Psoas muscle (tissue), 8 donors: ENCODE measurements at regions of chr18 and their contacts with region 1.

Region 1: GRCh38 chr18:7608781-7609201 is 41.7 kb downstream of the PTPRM start:
- DNase-seq: no peak
- ATAC-seq: peak; percentile 66 to 85 (median 71)
- H3K4me3 ChIP-seq: peak overlapping the region; percentile 47
- H3K27ac ChIP-seq: peak overlapping the region; percentile 89
- H3K4me1 ChIP-seq: peaks cover 73% of the 10 kb centered on the region
- H3K27me3 ChIP-seq: no peaks in the 10 kb centered on the region
- CTCF ChIP-seq: no peak

Region 2: DNA sequence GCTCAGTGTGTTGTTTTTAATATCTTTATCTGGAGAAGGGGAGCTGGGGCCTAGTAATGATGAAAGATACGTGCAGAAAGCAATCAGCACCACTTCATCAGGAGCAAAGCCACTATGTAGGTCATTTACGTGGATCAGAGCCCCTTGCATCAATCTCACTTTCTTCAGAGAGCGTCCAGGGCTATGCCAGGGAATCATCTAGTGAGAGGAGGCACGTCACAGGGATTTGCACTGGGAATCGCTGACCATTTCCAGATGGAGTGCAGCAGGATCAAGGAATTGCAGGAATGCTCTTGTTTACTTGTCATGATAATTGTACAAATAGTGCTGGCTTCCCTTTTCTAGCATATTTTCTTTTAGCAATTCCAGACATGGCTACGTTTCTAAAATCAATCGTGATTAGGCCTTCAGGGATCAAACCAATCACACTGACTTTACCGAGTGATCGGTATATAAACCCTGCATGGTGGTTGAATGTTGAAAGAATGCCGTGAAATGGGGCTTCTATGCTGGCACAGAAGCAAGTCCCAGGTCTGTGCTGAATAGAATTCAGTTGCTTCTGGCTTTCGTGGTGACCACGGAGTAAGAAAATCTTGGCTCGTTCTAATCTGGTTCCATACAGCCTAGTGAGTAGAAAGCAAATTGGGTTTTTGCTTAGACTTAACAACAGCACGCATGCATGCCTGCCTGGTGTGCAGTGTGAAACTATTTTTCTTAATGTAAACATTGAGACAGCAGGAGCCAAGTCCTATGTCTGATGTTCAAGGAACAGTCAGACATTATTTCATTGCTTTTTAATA is 1836.3 kb before region 1 on chr18:
- intact Hi-C with region 1: no loop called
- DNase-seq: no peak
- ATAC-seq: no peak
- H3K4me3 ChIP-seq: no peak overlapping the region
- H3K27ac ChIP-seq: no peak overlapping the region
- H3K4me1 ChIP-seq: no peaks in the 10 kb centered on the region
- H3K27me3 ChIP-seq: no peaks in the 10 kb centered on the region
- CTCF ChIP-seq: no peak

Region 3: GRCh38 chr18:7658712-7659111 is 49.9 kb after region 1 on chr18:
- intact Hi-C with region 1: loop called in 1 of 2 experiments (anchors 5 kb)
- DNase-seq: no peak
- ATAC-seq: no peak
- H3K4me3 ChIP-seq: no peak overlapping the region
- H3K27ac ChIP-seq: no peak overlapping the region
- H3K4me1 ChIP-seq: peaks cover 65% of the 10 kb centered on the region
- H3K27me3 ChIP-seq: no peaks in the 10 kb centered on the region
- CTCF ChIP-seq: no peak

Region 4: GRCh38 chr18:7926526-7926925 is 317.7 kb after region 1 on chr18:
- intact Hi-C with region 1: no loop called
- DNase-seq: no peak
- ATAC-seq: peak; percentile 79 to 89 (median 86)
- H3K4me3 ChIP-seq: no peak overlapping the region
- H3K27ac ChIP-seq: no peak overlapping the region
- H3K4me1 ChIP-seq: peaks cover 25% of the 10 kb centered on the region
- H3K27me3 ChIP-seq: no peaks in the 10 kb centered on the region
- CTCF ChIP-seq: peak; percentile 60